Naive thymus-derived CD4-positive, alpha-beta T cell (primary cell): ENCODE measurements at regions of chr5 and their contacts with region 1.

Region 1: GRCh38 chr5:54792611-54793404 is 192.6 kb downstream of the ESM1 start:
- DNase-seq: no peak
- ATAC-seq: no peak
- H3K4me3 ChIP-seq: no peak overlapping the region
- H3K4me3 Mint-ChIP-seq: peak overlapping the region in 1 of 10 donors; percentile 11
- H3K27ac ChIP-seq: no peak overlapping the region
- H3K27ac Mint-ChIP-seq: peak overlapping the region in 1 of 9 donors; percentile 65
- H3K4me1 ChIP-seq: no peaks in the 10 kb centered on the region
- H3K4me1 Mint-ChIP-seq: peaks cover 4 to 40% (median 16%) of the 10 kb centered on the region in 7 donors
- H3K27me3 ChIP-seq: no peaks in the 10 kb centered on the region
- H3K27me3 Mint-ChIP-seq: peaks cover 0 to 19% (median 4%) of the 10 kb centered on the region in 5 donors

Region 2: DNA sequence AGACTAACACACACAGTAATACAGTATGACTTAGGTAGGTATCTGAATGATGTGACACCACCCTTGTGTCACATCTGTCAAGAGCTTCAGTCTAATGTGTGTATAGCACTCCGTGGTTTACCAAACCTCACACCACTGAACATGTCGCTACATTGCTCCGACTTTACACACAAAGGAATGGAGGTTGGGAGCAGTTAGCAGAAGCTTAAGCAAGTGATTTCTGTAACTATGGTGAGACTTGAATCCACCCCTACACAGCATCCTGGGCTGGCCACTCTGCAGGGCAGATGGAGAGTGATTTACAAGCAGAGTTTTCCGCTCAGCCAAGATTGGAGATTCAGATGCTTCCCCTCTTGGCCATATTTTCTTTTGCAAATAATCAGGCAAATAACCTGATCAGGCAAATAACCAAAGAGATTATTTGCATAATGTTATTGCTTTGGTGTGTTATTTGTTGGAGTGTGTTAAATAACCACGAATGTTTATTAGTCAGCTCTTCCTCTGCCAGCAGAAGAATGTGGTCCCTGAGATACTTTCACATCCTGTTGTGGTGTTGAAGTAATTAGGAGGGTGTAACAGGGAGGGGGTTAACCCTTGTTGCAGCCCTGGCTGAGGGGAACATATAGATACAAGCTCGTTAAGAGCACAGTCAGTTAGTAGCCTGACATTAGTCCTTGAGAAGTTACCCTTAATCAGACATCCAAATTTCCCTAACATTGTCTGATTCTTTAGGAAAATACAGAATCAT is 182.4 kb before region 1 on chr5:
- CTCF ChIA-PET with region 1: no interaction called
- POLR2A ChIA-PET with region 1: no interaction called
- intact Hi-C with region 1: loop called in 1 of 2 experiments (anchors 2 kb)
- DNase-seq: peak in 6 of 9 donors; percentile 8 to 36 (median 22)
- ATAC-seq: peak; percentile 89
- H3K4me3 ChIP-seq: peak overlapping the region; percentile 23
- H3K4me3 Mint-ChIP-seq: peak overlapping the region in 9 of 10 donors; percentile 14 to 75 (median 52)
- H3K27ac ChIP-seq: no peak overlapping the region
- H3K27ac Mint-ChIP-seq: peak overlapping the region in 8 of 9 donors; percentile 4 to 88 (median 50)
- H3K4me1 ChIP-seq: peaks cover 14 to 32% of the 10 kb centered on the region in 2 donors
- H3K4me1 Mint-ChIP-seq: peaks cover 19 to 32% (median 23%) of the 10 kb centered on the region in 7 donors
- H3K27me3 ChIP-seq: no peaks in the 10 kb centered on the region
- H3K27me3 Mint-ChIP-seq: peaks cover 0 to 8% (median 0%) of the 10 kb centered on the region in 5 donors

Region 3: GRCh38 chr5:54719384-54720283 is 73.2 kb before region 1 on chr5:
- CTCF ChIA-PET with region 1: no interaction called
- POLR2A ChIA-PET with region 1: no interaction called
- intact Hi-C with region 1: loop called in 1 of 2 experiments (anchors 5 kb)
- DNase-seq: no peak
- ATAC-seq: no peak
- H3K4me3 ChIP-seq: no peak overlapping the region
- H3K4me3 Mint-ChIP-seq: no peak overlapping the region
- H3K27ac ChIP-seq: no peak overlapping the region
- H3K27ac Mint-ChIP-seq: peak overlapping the region in 1 of 9 donors; percentile 14
- H3K4me1 ChIP-seq: no peaks in the 10 kb centered on the region
- H3K4me1 Mint-ChIP-seq: peaks cover 0 to 33% (median 5%) of the 10 kb centered on the region in 7 donors
- H3K27me3 ChIP-seq: no peaks in the 10 kb centered on the region
- H3K27me3 Mint-ChIP-seq: peaks cover 0 to 5% (median 0%) of the 10 kb centered on the region in 5 donors

Region 4: GRCh38 chr5:55307383-55308253 is 514.8 kb after region 1 on chr5 and contains the starts of genes DHX29 and MTREX:
- CTCF ChIA-PET with region 1: no interaction called
- POLR2A ChIA-PET with region 1: no interaction called
- intact Hi-C with region 1: no loop called
- DNase-seq: peak; percentile 85 to 93 (median 91)
- ATAC-seq: peak; percentile 94
- H3K4me3 ChIP-seq: peak within 1 kb of the TSS; percentile 97
- H3K4me3 Mint-ChIP-seq: no peak within 1 kb of the TSS
- H3K27ac ChIP-seq: peak within 1 kb of the TSS; percentile 89
- H3K27ac Mint-ChIP-seq: no peak within 1 kb of the TSS
- H3K4me1 ChIP-seq: peaks cover 28 to 33% of the 10 kb centered on the region in 2 donors
- H3K4me1 Mint-ChIP-seq: peaks cover 15 to 34% (median 21%) of the 10 kb centered on the region in 7 donors
- H3K27me3 ChIP-seq: no peaks in the 10 kb centered on the region
- H3K27me3 Mint-ChIP-seq: no peaks in the 10 kb centered on the region
- total RNA-seq, gene DHX29: 12.5 to 19.2 (median 15.9) TPM
- total RNA-seq, gene MTREX: 64.0 to 83.7 (median 66.3) TPM